ENCODE measurements at regions of chr10 and their contacts with region 1.

Region 1: GRCh38 chr10:57247271-57247670 is 886.2 kb upstream of the ZWINT start:
- DNase-seq: no peak
- ATAC-seq: no peak
- H3K4me3 ChIP-seq: no peak overlapping the region
- H3K4me3 Mint-ChIP-seq: no peak overlapping the region
- H3K27ac ChIP-seq: no peak overlapping the region
- H3K27ac Mint-ChIP-seq: no peak overlapping the region
- H3K4me1 ChIP-seq: no peaks in the 10 kb centered on the region
- H3K4me1 Mint-ChIP-seq: no peaks in the 10 kb centered on the region
- H3K27me3 ChIP-seq: no peaks in the 10 kb centered on the region
- H3K27me3 Mint-ChIP-seq: no peaks in the 10 kb centered on the region

Region 2: GRCh38 chr10:57288754-57289153 is 41.5 kb after region 1 on chr10:
- CTCF ChIA-PET with region 1: no interaction called
- POLR2A ChIA-PET with region 1: no interaction called
- intact Hi-C with region 1: loop called in 1 of 2 experiments (anchors 2 kb)
- DNase-seq: no peak
- ATAC-seq: no peak
- H3K4me3 ChIP-seq: no peak overlapping the region
- H3K4me3 Mint-ChIP-seq: no peak overlapping the region
- H3K27ac ChIP-seq: no peak overlapping the region
- H3K27ac Mint-ChIP-seq: no peak overlapping the region
- H3K4me1 ChIP-seq: no peaks in the 10 kb centered on the region
- H3K4me1 Mint-ChIP-seq: no peaks in the 10 kb centered on the region
- H3K27me3 ChIP-seq: no peaks in the 10 kb centered on the region
- H3K27me3 Mint-ChIP-seq: no peaks in the 10 kb centered on the region